ENCODE measurements at regions of chr10 and their contacts with region 1.

Region 1: GRCh38 chr10:6678211-6678803 is 98.2 kb upstream of the PRKCQ start:
- DNase-seq: peak; percentile 29
- ATAC-seq: peak; percentile 63; the same call in 1 of the 2 replicates
- H3K4me3 ChIP-seq: no peak overlapping the region
- H3K27ac ChIP-seq: no peak overlapping the region
- H3K4me1 ChIP-seq: no peaks in the 10 kb centered on the region
- H3K27me3 ChIP-seq: no peaks in the 10 kb centered on the region
- CTCF ChIP-seq: peak; percentile 57
- POLR2A ChIP-seq: no peak
- RAD21 ChIP-seq: peak; percentile 56

Region 2: GRCh38 chr10:6786579-6787031 is 108.3 kb after region 1 on chr10:
- CTCF ChIA-PET with region 1: no interaction called
- POLR2A ChIA-PET with region 1: no interaction called
- dilution Hi-C with region 1: no loop called
- in situ Hi-C with region 1: no loop called
- intact Hi-C with region 1: loop called (anchors 5 kb)
- DNase-seq: peak; percentile 79
- ATAC-seq: peak; percentile 92
- H3K4me3 ChIP-seq: peak overlapping the region; percentile 9; the same call in 1 of the 2 replicates
- H3K27ac ChIP-seq: peak overlapping the region; percentile 63
- H3K4me1 ChIP-seq: peaks cover 7% of the 10 kb centered on the region
- H3K27me3 ChIP-seq: no peaks in the 10 kb centered on the region
- CTCF ChIP-seq: peak; percentile 63
- POLR2A ChIP-seq: no peak
- RAD21 ChIP-seq: peak; percentile 61

Region 3: GRCh38 chr10:6920072-6921019 is 242.0 kb after region 1 on chr10:
- CTCF ChIA-PET with region 1: interaction called, 3 read pairs
- POLR2A ChIA-PET with region 1: no interaction called
- dilution Hi-C with region 1: no loop called
- in situ Hi-C with region 1: no loop called
- intact Hi-C with region 1: loop called (anchors 10 kb)
- DNase-seq: peak; percentile 28
- ATAC-seq: peak; percentile 54
- H3K4me3 ChIP-seq: no peak overlapping the region
- H3K27ac ChIP-seq: no peak overlapping the region
- H3K4me1 ChIP-seq: no peaks in the 10 kb centered on the region
- H3K27me3 ChIP-seq: peaks cover 4% of the 10 kb centered on the region; the same call in 1 of the 2 replicates
- CTCF ChIP-seq: peak; percentile 42
- POLR2A ChIP-seq: no peak
- RAD21 ChIP-seq: peak; percentile 56